ENCODE measurements at regions of chr10 and their contacts with region 1.

Region 1: DNA sequence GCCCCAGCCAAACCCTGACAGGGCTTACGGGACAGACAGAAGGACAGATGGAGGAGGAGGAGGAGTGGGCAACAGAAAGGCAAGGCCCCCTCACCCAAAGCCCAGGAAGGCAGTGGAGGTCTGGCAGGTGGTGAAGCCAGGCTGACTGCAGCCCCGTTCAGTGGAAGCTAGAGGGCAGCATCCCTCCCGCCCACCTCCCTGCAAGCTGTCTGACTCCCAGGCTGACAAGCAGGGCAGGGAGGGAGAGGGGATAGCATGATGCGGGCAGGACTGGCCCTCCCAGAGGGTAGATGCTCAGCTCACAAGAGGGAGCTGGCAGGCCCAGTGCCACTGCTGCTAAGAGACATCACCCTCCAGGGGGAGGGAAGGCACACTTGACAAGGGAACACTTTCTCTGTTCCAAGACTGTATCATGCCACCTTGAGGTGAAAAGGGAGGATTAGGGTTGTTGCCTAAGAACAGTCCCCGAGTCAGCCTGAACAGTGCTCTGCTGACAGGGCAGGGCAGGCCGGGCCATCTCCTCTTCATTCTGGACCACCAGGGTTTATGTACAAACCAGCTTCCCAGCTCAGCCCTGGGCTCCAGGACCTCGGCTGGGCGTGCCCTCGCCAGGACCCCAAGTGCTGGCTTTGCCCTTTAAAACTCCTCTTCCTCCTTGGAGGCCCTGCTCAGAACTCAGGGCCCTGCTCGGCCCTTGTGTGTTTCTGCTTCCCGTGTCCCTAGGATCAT is 61.8 kb downstream of the RASGEF1A start:
- DNase-seq: peak; percentile 84
- H3K4me3 ChIP-seq: peak overlapping the region in 1 of 2 experiments; percentile 43; a peak in 1 of 4 replicates
- H3K27ac ChIP-seq: no peak overlapping the region
- H3K4me1 ChIP-seq: no peaks in the 10 kb centered on the region; a peak in 1 of 4 replicates
- H3K27me3 ChIP-seq: no peaks in the 10 kb centered on the region
- CTCF ChIP-seq: peak; percentile 65
- EP300 ChIP-seq: no peak
- RAD21 ChIP-seq: peak; percentile 50

Region 2: GRCh38 chr10:42532996-42533395 is 672.1 kb before region 1 on chr10:
- CTCF ChIA-PET with region 1: no interaction called
- POLR2A ChIA-PET with region 1: no interaction called
- DNase-seq: no peak
- H3K4me3 ChIP-seq: no peak overlapping the region
- H3K27ac ChIP-seq: no peak overlapping the region
- H3K4me1 ChIP-seq: no peaks in the 10 kb centered on the region
- H3K27me3 ChIP-seq: no peaks in the 10 kb centered on the region
- CTCF ChIP-seq: no peak
- EP300 ChIP-seq: no peak
- RAD21 ChIP-seq: no peak

Region 3: GRCh38 chr10:43193496-43194080 is 11.5 kb before region 1 on chr10:
- CTCF ChIA-PET with region 1: interaction called, 19 read pairs
- POLR2A ChIA-PET with region 1: no interaction called
- DNase-seq: peak; percentile 26
- H3K4me3 ChIP-seq: no peak overlapping the region
- H3K27ac ChIP-seq: no peak overlapping the region
- H3K4me1 ChIP-seq: peaks cover 0 to 9% of the 10 kb centered on the region in 2 experiments; a peak in 3 of 4 replicates
- H3K27me3 ChIP-seq: no peaks in the 10 kb centered on the region
- CTCF ChIP-seq: no peak
- EP300 ChIP-seq: no peak
- RAD21 ChIP-seq: no peak

Region 4: DNA sequence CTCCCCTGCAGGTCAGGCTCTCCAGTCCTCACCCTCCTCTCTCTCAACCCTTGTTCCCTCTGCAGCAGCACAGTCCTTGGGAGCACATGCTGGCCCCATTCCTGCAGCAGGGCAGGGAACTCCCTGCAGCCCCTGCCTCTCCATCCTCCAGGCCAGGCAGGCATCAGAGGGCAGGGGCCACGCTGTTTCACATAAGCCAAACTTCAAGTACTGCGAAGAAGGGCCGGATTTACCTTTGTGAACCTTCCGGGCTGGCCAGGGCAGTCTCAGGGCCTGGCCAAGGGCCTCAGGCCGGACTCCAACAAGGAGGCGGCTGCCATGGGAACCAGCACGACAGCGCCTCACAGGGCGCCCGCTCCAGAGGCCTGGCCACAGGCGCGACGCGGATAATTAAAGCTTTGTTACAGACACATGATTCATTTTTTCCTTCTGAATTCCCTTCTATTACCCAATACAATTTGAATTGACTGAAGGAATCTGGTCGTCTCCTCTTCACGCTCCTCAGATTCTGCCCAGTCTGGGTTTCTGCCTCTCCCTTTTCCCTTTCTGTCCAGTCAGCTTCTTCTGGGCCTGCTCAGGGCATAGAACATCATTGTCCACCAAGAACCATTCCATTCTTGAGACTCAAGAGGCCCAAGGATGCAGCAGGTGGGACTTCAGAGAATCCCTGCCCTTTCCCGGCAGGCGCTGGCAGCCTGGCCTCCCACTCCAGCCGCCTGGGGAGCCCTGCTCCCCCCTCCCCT is 13.5 kb after region 1 on chr10:
- CTCF ChIA-PET with region 1: interaction called, 18 read pairs
- POLR2A ChIA-PET with region 1: no interaction called
- DNase-seq: no peak
- H3K4me3 ChIP-seq: no peak overlapping the region
- H3K27ac ChIP-seq: no peak overlapping the region
- H3K4me1 ChIP-seq: peaks cover 0 to 21% of the 10 kb centered on the region in 2 experiments; a peak in 1 of 4 replicates
- H3K27me3 ChIP-seq: no peaks in the 10 kb centered on the region
- CTCF ChIP-seq: no peak
- EP300 ChIP-seq: no peak
- RAD21 ChIP-seq: no peak

Region 5: GRCh38 chr10:43255634-43256431 is 50.7 kb after region 1 on chr10:
- CTCF ChIA-PET with region 1: interaction called, 13 read pairs
- POLR2A ChIA-PET with region 1: no interaction called
- DNase-seq: peak; percentile 82
- H3K4me3 ChIP-seq: peak overlapping the region in 1 of 2 experiments; percentile 19; a peak in 1 of 4 replicates
- H3K27ac ChIP-seq: no peak overlapping the region
- H3K4me1 ChIP-seq: peaks cover 0 to 7% of the 10 kb centered on the region in 2 experiments; a peak in 1 of 4 replicates
- H3K27me3 ChIP-seq: 0 out of 2 replicates have a peak, but pooled peaks cover 9% of the 10 kb centered on the region
- CTCF ChIP-seq: peak; percentile 50
- EP300 ChIP-seq: no peak
- RAD21 ChIP-seq: peak; percentile 62

Region 6: GRCh38 chr10:43348511-43349312 is 143.6 kb after region 1 on chr10:
- CTCF ChIA-PET with region 1: interaction called, 10 read pairs
- POLR2A ChIA-PET with region 1: no interaction called
- DNase-seq: peak; percentile 95
- H3K4me3 ChIP-seq: no peak overlapping the region; a peak in 1 of 4 replicates
- H3K27ac ChIP-seq: no peak overlapping the region
- H3K4me1 ChIP-seq: peaks cover 0 to 17% of the 10 kb centered on the region in 2 experiments; a peak in 2 of 4 replicates
- H3K27me3 ChIP-seq: no peaks in the 10 kb centered on the region
- CTCF ChIP-seq: peak; percentile 90
- EP300 ChIP-seq: no peak
- RAD21 ChIP-seq: peak; percentile 93

Measured in SK-N-SH (cell line).